Activated CD4-positive, alpha-beta memory T cell treated with anti-CD3 and anti-CD28 coated beads for 36 hours (primary cell): ENCODE measurements at regions of chr6 and their contacts with region 1.

Region 1: GRCh38 chr6:73747289-73747688 is 51.3 kb downstream of the CD109 start:
- DNase-seq: no peak
- H3K4me3 Mint-ChIP-seq: no peak overlapping the region
- H3K27ac Mint-ChIP-seq: no peak overlapping the region
- H3K4me1 Mint-ChIP-seq: no peaks in the 10 kb centered on the region
- H3K27me3 Mint-ChIP-seq: no peaks in the 10 kb centered on the region

Region 2: DNA sequence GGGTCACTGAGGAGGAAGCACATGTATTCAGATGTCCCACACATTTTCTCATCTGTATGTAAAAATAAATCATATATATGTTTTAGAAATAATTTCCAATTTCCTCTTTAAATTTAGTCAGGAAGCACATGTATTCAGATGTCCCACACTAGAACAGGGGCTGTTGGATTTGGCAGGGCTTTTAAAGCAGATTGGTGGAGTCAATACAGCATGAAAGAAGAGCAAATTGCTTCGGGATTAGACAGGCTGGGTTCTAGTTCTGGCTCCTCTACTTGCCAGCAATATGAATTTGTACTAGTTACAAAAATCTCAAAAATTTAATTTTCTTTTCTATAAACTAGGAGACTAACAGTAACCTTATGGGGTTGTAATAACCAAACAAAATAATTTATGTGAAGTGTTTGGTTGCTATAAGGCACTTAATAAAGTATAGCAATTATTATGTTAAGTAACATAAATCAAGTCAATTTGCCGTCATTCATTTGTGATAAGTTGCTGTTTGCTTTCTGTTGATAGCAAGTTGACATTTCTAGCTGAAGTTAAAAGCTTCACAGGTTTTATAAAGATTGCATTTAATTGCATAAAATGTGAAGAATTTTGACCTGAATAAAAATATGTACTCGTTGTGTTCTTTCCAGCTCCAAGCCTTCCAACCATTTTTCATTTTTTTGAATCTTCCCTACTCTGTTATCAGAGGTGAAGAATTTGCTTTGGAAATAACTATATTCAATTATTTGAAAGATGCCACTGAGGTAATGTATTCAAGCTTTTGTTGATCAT is 37.6 kb after region 1 on chr6:
- CTCF ChIA-PET with region 1: interaction called, 3 read pairs
- POLR2A ChIA-PET with region 1: no interaction called
- intact Hi-C with region 1: loop called (anchors 5 kb)
- DNase-seq: no peak
- H3K4me3 Mint-ChIP-seq: no peak overlapping the region
- H3K27ac Mint-ChIP-seq: no peak overlapping the region
- H3K4me1 Mint-ChIP-seq: no peaks in the 10 kb centered on the region
- H3K27me3 Mint-ChIP-seq: no peaks in the 10 kb centered on the region

Region 3: GRCh38 chr6:74050921-74051320 is 303.6 kb after region 1 on chr6:
- CTCF ChIA-PET with region 1: no interaction called
- POLR2A ChIA-PET with region 1: no interaction called
- intact Hi-C with region 1: no loop called
- DNase-seq: no peak
- H3K4me3 Mint-ChIP-seq: no peak overlapping the region
- H3K27ac Mint-ChIP-seq: no peak overlapping the region
- H3K4me1 Mint-ChIP-seq: no peaks in the 10 kb centered on the region
- H3K27me3 Mint-ChIP-seq: no peaks in the 10 kb centered on the region

Region 4: GRCh38 chr6:74187811-74188210 is 440.5 kb after region 1 on chr6:
- CTCF ChIA-PET with region 1: no interaction called
- POLR2A ChIA-PET with region 1: no interaction called
- intact Hi-C with region 1: no loop called
- DNase-seq: no peak
- H3K4me3 Mint-ChIP-seq: no peak overlapping the region
- H3K27ac Mint-ChIP-seq: no peak overlapping the region
- H3K4me1 Mint-ChIP-seq: no peaks in the 10 kb centered on the region
- H3K27me3 Mint-ChIP-seq: no peaks in the 10 kb centered on the region